Natural killer cell (primary cell): ENCODE measurements at regions of chr2 and their contacts with region 1.

Region 1: DNA sequence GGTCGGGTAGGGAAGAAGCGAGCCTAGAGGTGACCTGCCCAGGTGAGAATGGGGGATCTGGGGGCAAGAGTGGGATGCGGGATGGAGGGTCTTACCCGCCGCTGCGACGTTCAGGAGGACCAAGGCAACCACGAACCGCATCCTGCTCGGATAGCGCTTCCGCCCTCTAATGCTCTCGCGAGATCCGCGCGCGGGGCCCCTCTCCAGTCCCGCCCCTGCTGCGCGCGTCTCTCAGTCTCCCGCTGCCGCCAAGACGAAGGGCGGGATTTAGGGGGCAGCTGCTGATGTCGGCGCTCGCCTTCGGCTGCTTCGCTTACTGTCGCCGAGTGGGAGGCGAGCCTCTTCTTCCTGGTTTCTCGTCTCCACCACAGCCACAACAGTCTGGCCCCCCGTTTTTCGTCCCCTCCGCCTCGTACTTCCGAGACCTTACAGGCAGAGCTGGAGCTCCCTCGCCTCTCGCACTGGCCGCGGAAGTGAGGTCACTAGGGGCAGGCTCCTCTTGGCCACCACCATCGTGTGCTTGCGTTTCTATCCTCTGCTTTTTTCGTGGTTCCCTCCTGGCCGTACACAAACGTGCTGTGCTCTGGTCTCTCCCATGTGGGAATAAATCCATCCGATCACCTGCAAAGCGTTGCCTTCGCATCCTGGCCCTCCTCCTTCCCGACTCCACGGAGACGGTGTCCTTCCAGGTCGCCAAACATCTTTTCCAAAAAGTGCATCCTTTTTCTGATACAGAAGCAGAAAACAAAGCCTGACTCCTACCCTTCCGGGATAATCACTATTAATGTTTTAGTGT is at the start of gene TGOLN2:
- DNase-seq: peak; percentile 96 to 97
- ATAC-seq: peak; percentile 91 to 97 (median 92)
- H3K4me3 ChIP-seq: peak within 1 kb of the TSS; percentile 67
- H3K4me3 Mint-ChIP-seq: peak within 1 kb of the TSS; percentile 97
- H3K27ac ChIP-seq: peak within 1 kb of the TSS; percentile 98
- H3K27ac Mint-ChIP-seq: peak within 1 kb of the TSS; percentile 99 to 100
- H3K4me1 ChIP-seq: peaks cover 40% of the 10 kb centered on the region
- H3K4me1 Mint-ChIP-seq: peaks cover 59 to 62% of the 10 kb centered on the region in 2 donors
- H3K27me3 ChIP-seq: no peaks in the 10 kb centered on the region
- H3K27me3 Mint-ChIP-seq: no peaks in the 10 kb centered on the region
- CTCF ChIP-seq: no peak
- total RNA-seq, gene TGOLN2: 190 to 207 (median 194) TPM

Region 2: DNA sequence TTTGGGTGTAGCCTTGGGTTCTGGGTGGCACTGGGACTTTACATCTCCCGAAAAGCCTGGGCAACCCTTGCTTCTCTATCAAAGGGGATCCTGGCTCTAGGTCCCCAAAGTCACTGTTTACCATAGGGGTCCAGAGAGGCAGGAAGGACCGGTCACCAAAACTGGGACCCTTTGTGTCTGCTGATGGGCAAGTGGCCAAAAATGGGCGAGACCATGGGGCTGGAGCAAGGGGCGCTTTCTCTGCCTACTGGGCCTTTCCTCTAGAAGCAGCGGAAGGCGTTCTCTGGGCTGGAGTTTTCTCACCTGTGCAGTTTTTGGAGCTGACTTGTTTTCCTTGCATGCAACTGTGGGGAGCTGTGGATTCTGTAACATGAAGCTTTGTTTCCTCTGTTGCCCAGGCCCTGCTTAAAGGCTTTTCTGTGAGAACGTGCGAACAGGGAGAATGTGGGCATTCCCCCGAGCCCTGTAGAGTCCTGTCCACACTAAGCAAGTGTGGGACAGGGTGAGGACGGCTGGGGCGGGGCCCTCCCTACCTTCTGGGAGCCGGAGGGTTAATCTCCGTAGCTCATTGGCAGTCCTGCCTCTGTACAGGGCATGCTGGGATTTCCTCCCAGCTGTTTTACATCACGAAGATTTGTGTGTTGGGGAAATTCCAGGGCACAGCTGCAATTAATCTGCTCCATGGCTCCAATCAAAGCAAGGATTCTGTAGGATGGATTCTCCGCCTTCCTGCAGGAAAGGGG is 50.4 kb before region 1 on chr2:
- intact Hi-C with region 1: no loop called
- DNase-seq: no peak
- ATAC-seq: no peak
- H3K4me3 ChIP-seq: no peak overlapping the region
- H3K4me3 Mint-ChIP-seq: no peak overlapping the region
- H3K27ac ChIP-seq: no peak overlapping the region
- H3K27ac Mint-ChIP-seq: no peak overlapping the region
- H3K4me1 ChIP-seq: no peaks in the 10 kb centered on the region
- H3K4me1 Mint-ChIP-seq: no peaks in the 10 kb centered on the region
- H3K27me3 ChIP-seq: no peaks in the 10 kb centered on the region
- H3K27me3 Mint-ChIP-seq: peaks cover 0 to 8% of the 10 kb centered on the region in 2 donors
- CTCF ChIP-seq: no peak

Region 3: DNA sequence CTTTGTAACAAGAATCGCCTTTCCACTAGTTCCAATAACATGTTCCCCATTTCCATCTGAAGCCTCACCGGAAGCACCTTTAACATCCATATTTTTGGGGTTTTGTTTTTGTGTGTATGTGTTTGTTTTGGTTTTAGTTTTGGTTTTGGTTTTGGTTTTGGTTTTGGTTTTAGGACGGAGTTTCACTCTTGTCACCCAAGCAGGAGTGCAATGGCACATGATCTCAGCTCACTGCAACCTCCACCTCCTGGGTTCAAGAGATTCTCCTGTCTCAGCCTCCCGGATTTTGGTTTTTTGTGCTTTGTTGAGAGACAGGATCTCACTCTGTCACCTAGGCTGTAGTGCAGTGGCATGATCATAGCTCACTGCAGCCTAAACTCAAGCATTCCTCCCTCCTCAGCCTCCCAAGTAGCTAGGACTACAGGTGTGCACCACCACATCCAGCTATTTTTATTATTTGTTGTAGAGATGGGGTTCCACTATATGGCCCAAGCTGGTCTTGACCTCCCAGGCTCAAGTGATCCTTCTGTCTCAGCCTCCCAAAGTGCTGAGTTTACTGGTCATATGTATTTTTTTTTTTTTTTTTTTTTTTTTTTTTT is 36.5 kb before region 1 on chr2:
- intact Hi-C with region 1: no loop called
- DNase-seq: peak in 1 of 2 donors; percentile 72
- ATAC-seq: peak; percentile 65 to 91 (median 76)
- H3K4me3 ChIP-seq: no peak overlapping the region
- H3K4me3 Mint-ChIP-seq: peak overlapping the region; percentile 70
- H3K27ac ChIP-seq: peak overlapping the region; percentile 63
- H3K27ac Mint-ChIP-seq: peak overlapping the region; percentile 83 to 99
- H3K4me1 ChIP-seq: peaks cover 5% of the 10 kb centered on the region
- H3K4me1 Mint-ChIP-seq: peaks cover 11% of the 10 kb centered on the region in 2 donors
- H3K27me3 ChIP-seq: no peaks in the 10 kb centered on the region
- H3K27me3 Mint-ChIP-seq: peaks cover 0 to 5% of the 10 kb centered on the region in 2 donors
- CTCF ChIP-seq: no peak

Region 4: DNA sequence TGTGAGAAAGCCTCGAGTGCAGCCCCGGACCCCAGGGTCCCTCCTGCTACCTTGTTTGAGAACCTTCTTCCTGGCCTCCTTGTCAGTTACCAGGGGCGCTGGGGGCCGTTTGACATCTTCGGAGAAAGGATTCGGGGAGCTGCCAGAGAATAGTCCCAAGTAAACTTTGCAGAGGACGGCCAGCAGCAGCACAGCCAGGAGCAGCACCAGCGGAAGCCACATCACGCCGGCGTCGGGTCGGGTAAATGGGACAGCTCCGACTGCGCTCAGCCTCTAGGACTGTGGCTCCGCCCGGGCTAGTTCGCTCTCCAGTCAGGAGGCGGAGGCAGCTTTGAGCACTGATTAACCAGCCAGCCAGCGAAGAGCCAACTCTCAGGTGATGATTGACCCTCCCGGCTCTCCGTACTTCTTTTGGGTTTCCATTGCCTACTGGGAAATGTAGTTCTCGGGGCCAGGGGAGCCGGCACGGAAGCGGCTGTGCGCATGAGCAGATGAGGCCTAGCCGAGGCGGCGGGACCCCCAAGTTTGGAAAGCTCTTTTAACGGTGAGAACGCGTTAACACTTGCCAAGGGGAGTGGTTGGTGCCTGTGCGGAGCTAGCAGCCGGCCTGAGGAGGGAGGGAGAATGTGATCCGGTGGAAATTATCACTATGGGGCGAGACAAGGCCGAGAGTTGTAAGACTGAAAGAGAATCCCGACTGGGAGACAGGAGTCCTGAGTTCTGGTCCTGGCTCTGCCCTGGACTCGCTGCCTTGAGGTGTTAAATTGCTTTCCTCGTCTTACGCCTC is 26.5 kb after region 1 on chr2 and contains the starts of genes ELMOD3 and RETSAT:
- intact Hi-C with region 1: loop called (anchors 1 kb)
- DNase-seq: peak; percentile 90 to 99
- ATAC-seq: peak; percentile 97 to 100 (median 97)
- H3K4me3 ChIP-seq: peak within 1 kb of the TSS; percentile 70
- H3K4me3 Mint-ChIP-seq: peak within 1 kb of the TSS; percentile 98
- H3K27ac ChIP-seq: peak within 1 kb of the TSS; percentile 84
- H3K27ac Mint-ChIP-seq: peak within 1 kb of the TSS; percentile 96 to 100
- H3K4me1 ChIP-seq: peaks cover 19% of the 10 kb centered on the region
- H3K4me1 Mint-ChIP-seq: peaks cover 46 to 50% of the 10 kb centered on the region in 2 donors
- H3K27me3 ChIP-seq: no peaks in the 10 kb centered on the region
- H3K27me3 Mint-ChIP-seq: no peaks in the 10 kb centered on the region
- CTCF ChIP-seq: no peak
- total RNA-seq, gene ELMOD3: 22.4 to 33.9 (median 24.8) TPM
- total RNA-seq, gene RETSAT: 22.7 to 36.5 (median 33.9) TPM